Activated CD8-positive, alpha-beta T cell treated with anti-CD3 and anti-CD28 coated beads, Interleukin-2, amount 10 ng/mL, durations not matched to agents 7 days and 5 days (primary cell): ENCODE measurements at regions of chr3 and their contacts with region 1.

Region 1: DNA sequence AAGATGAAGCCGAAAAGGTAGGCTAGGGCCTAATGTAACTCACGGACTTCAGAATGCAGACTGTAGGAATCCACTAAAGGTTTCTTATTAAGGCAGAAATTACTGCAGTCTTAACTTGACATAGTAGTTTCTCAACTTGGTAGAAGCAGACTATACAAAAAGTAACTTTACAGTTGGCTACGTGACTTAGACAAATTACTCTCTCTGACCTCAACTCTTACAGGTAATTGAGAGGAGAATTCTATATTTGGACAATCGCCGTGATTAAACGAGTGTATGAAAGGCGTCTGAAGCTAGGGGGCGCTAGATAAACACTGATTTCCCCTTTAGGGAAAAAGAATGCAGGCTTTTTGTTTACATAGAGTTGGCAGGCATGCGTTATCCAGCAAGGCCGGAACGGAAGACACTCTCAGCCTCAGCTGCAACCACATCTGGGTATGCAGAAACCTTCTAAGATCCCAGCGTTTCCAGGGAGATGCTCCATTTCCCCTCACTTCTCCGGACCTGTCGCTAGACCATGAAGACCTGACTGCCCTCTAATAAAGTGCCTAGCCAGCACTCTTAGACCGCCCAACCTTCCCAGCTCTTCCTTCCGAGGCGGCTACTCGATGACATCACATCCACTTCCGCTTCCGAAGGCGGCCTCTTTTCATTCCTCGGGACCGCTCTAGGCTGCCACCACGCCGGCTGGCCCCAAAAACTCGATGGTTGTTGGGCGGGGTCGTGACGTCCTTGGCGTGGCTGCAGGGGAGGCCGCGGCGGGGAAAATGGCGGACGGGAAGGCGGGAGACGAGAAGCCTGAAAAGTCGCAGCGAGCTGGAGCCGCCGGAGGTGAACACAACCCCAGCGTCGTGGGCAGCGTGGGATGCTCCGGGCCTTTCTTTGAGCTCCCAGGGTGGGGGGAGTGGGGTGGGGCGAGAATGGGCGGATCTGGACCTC is at the start of gene PCNP:
- DNase-seq: peak; percentile 100
- ATAC-seq: peak; percentile 81
- H3K4me3 Mint-ChIP-seq: peak within 1 kb of the TSS; percentile 89
- H3K27ac Mint-ChIP-seq: peak within 1 kb of the TSS; percentile 96
- H3K4me1 Mint-ChIP-seq: peaks cover 65% of the 10 kb centered on the region
- H3K27me3 Mint-ChIP-seq: no peaks in the 10 kb centered on the region
- total RNA-seq, gene PCNP: 180 to 181 TPM

Region 2: GRCh38 chr3:101518421-101518871 is 55.3 kb before region 1 on chr3:
- CTCF ChIA-PET with region 1: interaction called, 41 read pairs
- POLR2A ChIA-PET with region 1: interaction called, 24 read pairs
- DNase-seq: peak; percentile 65
- ATAC-seq: peak; percentile 93
- H3K4me3 Mint-ChIP-seq: peak overlapping the region; percentile 4
- H3K27ac Mint-ChIP-seq: peak overlapping the region; percentile 80
- H3K4me1 Mint-ChIP-seq: peaks cover 56% of the 10 kb centered on the region
- H3K27me3 Mint-ChIP-seq: no peaks in the 10 kb centered on the region

Region 3: GRCh38 chr3:101561630-101562328 is 11.9 kb before region 1 on chr3 and contains the start of gene TRMT10C:
- CTCF ChIA-PET with region 1: interaction called, 15 read pairs
- POLR2A ChIA-PET with region 1: interaction called, 32 read pairs
- DNase-seq: peak; percentile 96
- ATAC-seq: peak; percentile 98
- H3K4me3 Mint-ChIP-seq: peak within 1 kb of the TSS; percentile 98
- H3K27ac Mint-ChIP-seq: peak within 1 kb of the TSS; percentile 98
- H3K4me1 Mint-ChIP-seq: peaks cover 30% of the 10 kb centered on the region
- H3K27me3 Mint-ChIP-seq: peaks cover under 1% of the 10 kb centered on the region
- total RNA-seq, gene TRMT10C: 25.0 to 26.8 TPM

Region 4: DNA sequence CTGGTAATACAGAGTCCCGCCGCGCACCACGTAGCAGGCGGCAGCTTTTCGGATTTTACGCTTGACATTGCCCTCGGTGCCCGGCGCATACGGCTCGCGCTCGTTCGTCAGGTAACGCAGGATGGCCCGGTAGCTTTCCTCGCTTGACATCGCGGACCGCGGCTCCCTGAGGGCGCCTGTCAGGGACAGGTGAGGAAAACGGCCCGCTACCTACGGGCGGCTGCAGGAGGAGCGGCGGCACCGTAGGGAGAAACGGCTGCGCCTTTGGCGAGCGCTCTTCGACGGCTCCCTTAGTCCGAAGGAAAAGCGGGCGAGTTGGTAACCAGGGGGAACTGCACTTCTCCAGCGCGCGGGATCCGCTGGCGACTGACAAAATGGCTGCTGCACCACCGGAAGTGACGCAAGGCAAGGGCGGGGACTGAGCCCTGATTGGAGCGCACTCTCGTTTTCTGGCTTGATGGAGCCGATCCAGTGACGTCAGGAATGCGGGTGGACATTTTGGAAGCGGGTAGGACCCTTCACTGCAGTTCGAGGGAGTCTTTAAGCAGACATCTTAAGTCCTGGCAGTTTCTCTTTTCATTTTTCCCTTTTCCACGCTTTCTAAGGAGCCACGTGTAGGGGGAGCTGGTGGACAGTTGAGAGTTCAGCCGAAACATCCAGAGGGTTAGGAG is 103.2 kb after region 1 on chr3 and contains the start of gene ZBTB11:
- CTCF ChIA-PET with region 1: interaction called, 28 read pairs
- POLR2A ChIA-PET with region 1: interaction called, 27 read pairs
- DNase-seq: peak; percentile 100
- ATAC-seq: peak; percentile 76
- H3K4me3 Mint-ChIP-seq: peak within 1 kb of the TSS; percentile 95
- H3K27ac Mint-ChIP-seq: peak within 1 kb of the TSS; percentile 95
- H3K4me1 Mint-ChIP-seq: peaks cover 50% of the 10 kb centered on the region
- H3K27me3 Mint-ChIP-seq: no peaks in the 10 kb centered on the region
- total RNA-seq, gene ZBTB11: 30.7 to 33.6 TPM